Posterior cingulate gyrus (tissue), 11 donors: ENCODE measurements at regions of chr4 and their contacts with region 1.

Region 1: GRCh38 chr4:8917868-8918783 is 46.5 kb upstream of the HMX1 start:
- DNase-seq: peak; percentile 54 to 96 (median 78)

Region 2: GRCh38 chr4:8468746-8469535 is 449.2 kb before region 1 on chr4:
- intact Hi-C with region 1: loop called (anchors 5 kb)
- DNase-seq: peak; percentile 56 to 95 (median 74)

Region 3: DNA sequence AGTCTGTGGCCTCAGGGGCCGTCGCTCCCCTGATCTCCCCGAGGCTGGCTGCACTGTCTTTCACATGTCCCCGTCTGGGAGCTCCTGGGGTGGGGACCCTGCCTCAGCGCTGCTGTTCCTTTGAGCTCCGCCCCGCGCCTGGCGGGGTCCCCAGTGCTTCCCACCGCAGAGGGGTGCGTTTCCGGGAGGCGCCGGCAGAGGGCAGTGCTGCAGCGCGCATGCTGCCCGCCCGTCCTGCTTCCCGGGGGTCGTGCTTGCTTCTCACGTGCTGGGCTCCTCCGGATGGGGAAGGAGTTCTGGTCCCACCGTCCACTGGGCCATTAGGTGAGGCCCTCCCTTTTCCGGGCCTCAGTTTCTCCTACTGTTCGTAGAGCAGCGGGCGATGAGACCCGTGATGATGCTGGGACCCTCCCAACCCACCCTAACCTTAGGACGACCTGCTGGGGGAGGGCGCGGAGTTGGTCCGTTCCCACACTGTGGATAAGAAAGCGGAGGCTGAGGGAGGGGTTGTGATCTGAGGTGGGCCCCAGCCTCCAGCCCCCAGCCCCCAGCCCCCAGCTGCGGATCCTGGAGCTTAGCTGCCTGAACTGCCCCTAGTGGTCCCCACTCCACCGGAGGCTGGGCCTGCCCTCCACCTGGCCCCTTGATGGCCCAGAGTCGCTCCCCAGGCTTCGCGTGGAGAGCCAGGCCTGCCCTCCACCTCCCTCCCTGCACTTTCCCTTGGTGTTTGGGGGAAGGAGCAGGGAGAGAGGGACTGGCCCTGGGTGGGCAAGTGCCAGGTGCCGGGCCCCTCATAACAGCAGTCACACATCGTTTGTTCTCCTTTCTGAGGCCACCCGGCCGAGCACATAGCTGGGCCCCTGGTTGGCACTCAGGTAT is 310.3 kb before region 1 on chr4:
- intact Hi-C with region 1: loop called (anchors 1 kb)
- DNase-seq: peak in 6 of 10 donors; percentile 36 to 92 (median 58)

Region 4: DNA sequence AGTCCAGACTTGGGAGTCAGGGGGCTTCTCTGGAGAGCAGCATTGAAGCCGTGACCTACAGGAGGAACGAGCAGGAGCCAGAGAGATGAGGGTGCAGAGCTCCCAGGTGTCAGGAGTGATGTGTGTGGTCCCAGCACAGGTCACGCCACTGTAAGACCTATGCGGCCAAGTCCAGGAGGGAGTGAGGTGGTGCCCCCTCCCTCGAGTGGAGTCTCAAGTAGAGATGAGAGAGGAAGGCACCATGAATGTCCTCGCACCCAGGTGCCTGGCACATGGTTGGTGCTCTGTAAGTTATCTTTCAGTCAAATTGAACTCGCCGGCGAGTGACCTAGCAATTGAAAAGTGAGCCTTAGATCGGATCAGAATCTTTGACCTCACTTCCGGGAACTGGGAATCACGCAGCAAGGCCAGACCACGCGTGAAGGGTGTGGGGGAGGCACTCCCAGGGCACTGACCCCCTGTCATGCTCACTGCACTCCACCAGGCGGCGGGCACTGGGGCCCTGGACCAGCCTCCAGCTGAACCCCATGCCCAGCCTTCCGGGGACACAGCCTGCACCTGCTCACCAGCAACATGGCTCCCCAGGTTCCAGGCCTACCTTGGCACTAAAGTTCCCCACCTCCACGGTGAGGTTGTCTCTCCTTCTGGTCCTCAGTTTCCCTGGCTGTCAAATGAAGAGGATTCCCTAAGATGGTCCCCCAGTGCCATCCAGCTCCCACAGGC is 173.9 kb before region 1 on chr4:
- intact Hi-C with region 1: no loop called
- DNase-seq: peak in 5 of 10 donors; percentile 1 to 79 (median 8)

Region 5: GRCh38 chr4:8832113-8832915 is 85.8 kb before region 1 on chr4:
- intact Hi-C with region 1: no loop called
- DNase-seq: peak in 5 of 10 donors; percentile 7 to 55 (median 42)